Activated T-helper 1 cell treated with anti-CD3 and anti-CD28 coated beads, Interleukin-12 subunit alpha, Interleukin-12 subunit beta, Interleukin-2, Interleukin-4 antibody, amounts not matched to agents 30 ng/mL and 10 ng/mL and 1 ng/mL, durations not matched to agents 14 hours and 24 hours and 36 hours (primary cell): ENCODE measurements at regions of chr5 and their contacts with region 1.

Region 1: GRCh38 chr5:62354028-62354874 is 48.2 kb downstream of the KIF2A start:
- DNase-seq: no peak
- H3K4me3 Mint-ChIP-seq: no peak overlapping the region
- H3K27ac Mint-ChIP-seq: no peak overlapping the region
- H3K4me1 Mint-ChIP-seq: peaks cover 18% of the 10 kb centered on the region
- H3K27me3 Mint-ChIP-seq: no peaks in the 10 kb centered on the region

Region 2: DNA sequence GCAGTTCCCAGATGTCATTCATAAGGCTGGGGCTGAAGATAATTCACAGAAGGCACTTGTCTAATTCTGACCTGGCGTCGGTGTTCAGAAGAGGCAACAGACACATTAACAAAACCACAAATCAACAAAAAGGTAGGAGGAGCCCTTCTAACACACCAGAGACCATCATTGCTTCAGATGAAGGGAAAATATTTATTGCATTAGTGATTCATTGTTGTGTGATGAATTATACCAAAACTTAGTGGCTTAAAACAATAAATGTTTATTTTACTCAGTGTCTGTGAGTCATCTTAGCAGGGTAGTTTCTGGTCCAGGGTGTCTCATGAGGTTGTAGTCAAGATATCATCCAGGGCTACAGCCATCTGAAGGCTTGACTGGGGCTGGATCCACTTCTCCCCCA is 139.6 kb before region 1 on chr5:
- intact Hi-C with region 1: no loop called
- DNase-seq: no peak
- H3K4me3 Mint-ChIP-seq: no peak overlapping the region
- H3K27ac Mint-ChIP-seq: no peak overlapping the region
- H3K4me1 Mint-ChIP-seq: no peaks in the 10 kb centered on the region
- H3K27me3 Mint-ChIP-seq: peaks cover 21% of the 10 kb centered on the region

Region 3: DNA sequence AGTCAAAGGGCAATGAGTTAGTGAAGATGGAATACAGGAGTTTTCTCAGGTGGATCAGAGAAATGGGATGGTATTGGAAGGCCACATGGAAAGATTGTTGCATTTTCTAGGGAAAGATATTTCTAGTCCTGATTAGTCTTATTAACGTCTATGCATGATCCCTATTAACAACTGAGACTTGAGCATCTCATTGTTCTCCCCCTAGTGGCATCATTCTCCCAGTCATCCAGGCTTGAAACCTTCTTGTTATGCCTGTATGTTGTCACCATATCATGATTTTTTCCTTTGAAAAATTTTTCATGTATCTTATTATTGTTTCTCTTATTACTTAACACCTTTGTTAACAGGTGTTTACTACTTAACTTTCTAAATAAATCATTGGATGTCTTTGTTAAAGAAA is 13.9 kb before region 1 on chr5:
- intact Hi-C with region 1: loop called (anchors 2 kb)
- DNase-seq: no peak
- H3K4me3 Mint-ChIP-seq: no peak overlapping the region
- H3K27ac Mint-ChIP-seq: no peak overlapping the region
- H3K4me1 Mint-ChIP-seq: peaks cover 69% of the 10 kb centered on the region
- H3K27me3 Mint-ChIP-seq: no peaks in the 10 kb centered on the region

Region 4: DNA sequence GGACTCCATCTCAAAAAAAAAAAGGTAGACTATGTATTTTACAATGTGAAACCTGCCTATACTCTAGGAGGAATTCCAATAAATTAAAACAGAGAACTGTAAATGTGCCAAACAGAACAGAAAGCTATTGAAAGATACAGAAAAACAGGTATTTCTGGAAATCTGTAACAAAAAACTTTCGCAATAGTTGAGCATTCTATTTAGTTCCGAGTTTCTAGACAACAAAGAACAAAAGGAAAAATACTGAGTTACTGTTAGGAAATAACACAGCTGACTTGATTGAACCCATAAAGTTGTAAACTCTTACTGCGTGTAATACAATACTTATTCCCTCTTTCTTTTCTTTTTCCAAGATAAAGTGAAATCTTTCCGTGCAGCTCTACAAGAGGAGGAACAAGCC is 30.9 kb after region 1 on chr5:
- intact Hi-C with region 1: loop called (anchors 5 kb)
- DNase-seq: no peak
- H3K4me3 Mint-ChIP-seq: no peak overlapping the region
- H3K27ac Mint-ChIP-seq: no peak overlapping the region
- H3K4me1 Mint-ChIP-seq: no peaks in the 10 kb centered on the region
- H3K27me3 Mint-ChIP-seq: no peaks in the 10 kb centered on the region

Region 5: GRCh38 chr5:62403434-62404250 is 49.4 kb after region 1 on chr5 and contains the start of gene DIMT1:
- intact Hi-C with region 1: loop called (anchors 2 kb)
- DNase-seq: peak; percentile 93
- H3K4me3 Mint-ChIP-seq: peak within 1 kb of the TSS; percentile 95
- H3K27ac Mint-ChIP-seq: peak within 1 kb of the TSS; percentile 94
- H3K4me1 Mint-ChIP-seq: peaks cover 34% of the 10 kb centered on the region
- H3K27me3 Mint-ChIP-seq: no peaks in the 10 kb centered on the region
- total RNA-seq, gene DIMT1: 42.4 and 45.0 TPM in 2 replicates